ENCODE measurements at regions of chr20 and their contacts with region 1.

Region 1: GRCh38 chr20:21395666-21396598 is 1.4 kb downstream of the NKX2-4 start:
- DNase-seq: peak in 1 of 2 donors; percentile 60
- H3K4me3 ChIP-seq: peak overlapping the region; percentile 7 to 39 (median 22)
- H3K27ac ChIP-seq: no peak overlapping the region
- H3K4me1 ChIP-seq: peaks cover 16 to 33% (median 24%) of the 10 kb centered on the region in 4 donors
- H3K27me3 ChIP-seq: peaks cover 22 to 100% (median 89%) of the 10 kb centered on the region in 3 donors
- CTCF ChIP-seq: no peak
- EP300 ChIP-seq: no peak
- POLR2A ChIP-seq: no peak

Region 2: GRCh38 chr20:21339499-21339898 is 56.4 kb before region 1 on chr20:
- intact Hi-C with region 1: loop called (anchors 10 kb)
- DNase-seq: no peak
- H3K4me3 ChIP-seq: no peak overlapping the region
- H3K27ac ChIP-seq: no peak overlapping the region
- H3K4me1 ChIP-seq: no peaks in the 10 kb centered on the region
- H3K27me3 ChIP-seq: no peaks in the 10 kb centered on the region
- CTCF ChIP-seq: no peak
- EP300 ChIP-seq: no peak
- POLR2A ChIP-seq: no peak